ENCODE measurements at regions of chr4 and their contacts with region 1.

Region 1: GRCh38 chr4:5050520-5051277 is 581 bp upstream of the STK32B start:
- DNase-seq: peak; percentile 70
- ATAC-seq: peak; percentile 77
- H3K4me3 Mint-ChIP-seq: peak overlapping the region; percentile 63
- H3K27ac Mint-ChIP-seq: peak overlapping the region; percentile 12
- H3K4me1 Mint-ChIP-seq: peaks cover 10% of the 10 kb centered on the region
- H3K27me3 Mint-ChIP-seq: peaks cover 46% of the 10 kb centered on the region

Region 2: GRCh38 chr4:5376015-5376414 is 325.3 kb after region 1 on chr4:
- CTCF ChIA-PET with region 1: no interaction called
- POLR2A ChIA-PET with region 1: no interaction called
- intact Hi-C with region 1: loop called in 1 of 2 experiments (anchors 2 kb)
- DNase-seq: no peak
- ATAC-seq: no peak
- H3K4me3 Mint-ChIP-seq: no peak overlapping the region
- H3K27ac Mint-ChIP-seq: no peak overlapping the region
- H3K4me1 Mint-ChIP-seq: no peaks in the 10 kb centered on the region
- H3K27me3 Mint-ChIP-seq: peaks cover 3% of the 10 kb centered on the region

Region 3: GRCh38 chr4:5791654-5792053 is 741.0 kb after region 1 on chr4:
- CTCF ChIA-PET with region 1: interaction called, 3 read pairs
- POLR2A ChIA-PET with region 1: no interaction called
- intact Hi-C with region 1: loop called in 1 of 2 experiments (anchors 1 kb)
- DNase-seq: no peak
- ATAC-seq: no peak
- H3K4me3 Mint-ChIP-seq: no peak overlapping the region
- H3K27ac Mint-ChIP-seq: no peak overlapping the region
- H3K4me1 Mint-ChIP-seq: no peaks in the 10 kb centered on the region
- H3K27me3 Mint-ChIP-seq: peaks cover 2% of the 10 kb centered on the region

Region 4: GRCh38 chr4:5812506-5813229 is 762.0 kb after region 1 on chr4:
- CTCF ChIA-PET with region 1: interaction called, 3 read pairs
- POLR2A ChIA-PET with region 1: no interaction called
- intact Hi-C with region 1: loop called (anchors 2 kb)
- DNase-seq: peak; percentile 35
- ATAC-seq: peak; percentile 49
- H3K4me3 Mint-ChIP-seq: no peak overlapping the region
- H3K27ac Mint-ChIP-seq: no peak overlapping the region
- H3K4me1 Mint-ChIP-seq: no peaks in the 10 kb centered on the region
- H3K27me3 Mint-ChIP-seq: peaks cover 3% of the 10 kb centered on the region